Endothelial cell of umbilical vein (primary cell): ENCODE measurements at regions of chr2 and their contacts with region 1.

Region 1: DNA sequence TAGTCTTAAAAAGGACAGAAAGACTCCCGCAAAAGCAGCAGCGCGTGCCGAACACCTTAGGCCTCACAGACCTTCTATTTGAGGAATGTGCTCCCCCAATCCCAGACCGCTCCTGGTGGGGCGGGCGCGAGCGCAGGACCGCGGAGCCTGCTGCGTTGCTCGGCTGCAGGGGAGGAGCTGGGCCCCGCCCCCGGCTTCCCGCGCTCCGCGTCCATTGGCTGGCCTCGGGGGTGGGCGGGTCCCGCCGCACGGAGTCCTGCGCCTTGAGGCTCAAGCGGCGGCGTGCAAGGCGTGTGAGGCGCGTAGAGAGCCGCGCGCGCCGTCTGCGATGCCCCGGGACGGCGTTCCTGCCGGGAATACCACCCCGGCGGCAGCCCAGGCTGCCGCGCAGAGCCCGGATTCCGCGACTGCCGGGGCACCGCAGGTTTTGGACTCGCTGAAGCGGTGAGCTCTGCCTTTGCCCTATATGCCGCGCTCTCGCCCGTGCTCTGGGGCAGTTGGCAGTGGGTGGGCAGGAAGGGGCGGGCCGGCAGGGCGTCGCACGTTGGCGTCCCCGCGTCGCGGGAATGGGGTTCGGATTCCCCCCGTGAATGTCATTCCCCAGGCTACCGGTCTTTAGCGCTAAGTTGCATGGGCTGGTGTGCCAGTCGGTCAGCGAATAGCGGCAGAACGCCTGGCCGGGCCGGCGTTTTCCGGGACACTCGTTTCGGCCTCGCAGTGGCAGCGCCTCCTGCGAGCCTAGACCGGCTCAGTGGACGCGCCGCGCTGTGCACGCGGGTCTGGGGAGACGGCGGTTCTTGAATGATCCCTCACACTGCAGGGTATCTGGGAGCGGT is 49.6 kb upstream of the PAIP2B start:
- DNase-seq: peak; percentile 93
- H3K4me3 ChIP-seq: peak overlapping the region; percentile 57 to 82 (median 65)
- H3K27ac ChIP-seq: no peak overlapping the region
- H3K4me1 ChIP-seq: peaks cover 14% of the 10 kb centered on the region
- H3K27me3 ChIP-seq: peaks cover 3 to 11% of the 10 kb centered on the region in 2 experiments
- CTCF ChIP-seq: peak in 1 of 2 donors; percentile 12
- POLR2A ChIP-seq: peak; percentile 44

Region 2: GRCh38 chr2:71157124-71157793 is 119.3 kb before region 1 on chr2:
- CTCF ChIA-PET with region 1: no interaction called
- POLR2A ChIA-PET with region 1: no interaction called
- dilution Hi-C with region 1: no loop called
- intact Hi-C with region 1: loop called (anchors 2 kb)
- DNase-seq: peak; percentile 42
- H3K4me3 ChIP-seq: no peak overlapping the region
- H3K27ac ChIP-seq: no peak overlapping the region
- H3K4me1 ChIP-seq: no peaks in the 10 kb centered on the region
- H3K27me3 ChIP-seq: peaks cover 0 to 7% of the 10 kb centered on the region in 2 experiments
- CTCF ChIP-seq: peak; percentile 57 to 85
- POLR2A ChIP-seq: no peak

Region 3: GRCh38 chr2:71226965-71227560 is 49.5 kb before region 1 on chr2 and contains the start of gene PAIP2B:
- CTCF ChIA-PET with region 1: interaction called, 5 read pairs
- POLR2A ChIA-PET with region 1: no interaction called
- dilution Hi-C with region 1: no loop called
- intact Hi-C with region 1: loop called (anchors 1 kb)
- DNase-seq: peak; percentile 100
- H3K4me3 ChIP-seq: peak within 1 kb of the TSS; percentile 46 to 59 (median 52)
- H3K27ac ChIP-seq: no peak within 1 kb of the TSS
- H3K4me1 ChIP-seq: peaks cover 10% of the 10 kb centered on the region
- H3K27me3 ChIP-seq: peaks cover 13 to 26% of the 10 kb centered on the region in 2 experiments
- CTCF ChIP-seq: no peak
- POLR2A ChIP-seq: no peak
- total RNA-seq, gene PAIP2B: 0.58 and 0.62 TPM in 2 replicates